Right ventricle myocardium inferior (tissue), 1 donor: ENCODE measurements at regions of chr9 and their contacts with region 1.

Region 1: DNA sequence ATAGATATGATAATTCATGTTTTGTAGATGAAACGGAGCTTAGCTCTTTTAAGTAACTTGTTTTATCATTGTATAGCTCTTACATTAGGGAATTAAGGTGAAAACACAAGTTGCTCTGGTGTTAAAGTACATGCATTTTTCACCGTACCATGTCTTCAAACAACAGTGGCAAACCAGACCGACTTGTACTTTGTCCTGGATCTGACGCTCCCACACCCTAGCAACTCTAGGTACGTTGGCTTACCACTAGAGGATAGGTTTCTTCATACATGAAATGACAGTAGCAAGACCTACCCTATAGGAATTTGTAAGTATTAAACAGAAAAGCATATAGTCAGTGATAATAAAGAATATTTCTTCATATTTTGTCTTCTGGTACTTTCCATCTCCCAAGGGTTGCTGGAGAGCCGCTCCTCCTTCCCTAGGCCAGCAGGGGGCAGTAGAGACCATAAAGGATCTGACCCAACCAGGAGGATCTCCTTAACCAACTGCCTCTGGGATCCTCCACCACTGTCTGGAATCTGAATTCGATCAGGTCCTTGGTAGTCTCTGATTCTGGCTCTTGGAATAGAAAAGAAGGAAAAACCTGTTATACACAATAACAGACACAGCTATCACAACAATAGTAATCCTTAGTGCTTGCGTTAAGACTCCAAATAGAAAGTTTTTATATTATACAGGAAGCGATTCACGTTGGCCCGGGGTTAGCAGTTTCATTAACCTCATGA is 136.7 kb downstream of the CAVIN4 start:
- DNase-seq: no peak
- ATAC-seq: peak; percentile 64

Region 2: DNA sequence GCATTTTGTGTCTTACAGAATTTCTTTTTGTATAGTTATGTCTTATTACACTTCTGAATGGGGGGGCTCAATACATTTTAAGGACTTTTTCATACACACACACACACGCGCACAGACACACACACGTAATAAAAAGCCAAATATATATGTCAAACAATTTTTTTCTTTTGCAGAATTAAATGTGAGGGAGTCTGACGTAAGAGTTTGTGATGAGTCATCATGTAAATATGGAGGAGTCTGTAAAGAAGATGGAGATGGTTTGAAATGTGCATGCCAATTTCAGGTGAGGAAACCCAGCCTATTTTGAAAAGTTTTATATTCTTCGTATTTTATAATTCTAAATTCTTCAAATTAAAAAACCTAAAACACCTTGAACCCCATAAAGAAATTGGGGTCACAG is 215.9 kb before region 1 on chr9:
- intact Hi-C with region 1: no loop called
- DNase-seq: no peak
- ATAC-seq: no peak

Region 3: DNA sequence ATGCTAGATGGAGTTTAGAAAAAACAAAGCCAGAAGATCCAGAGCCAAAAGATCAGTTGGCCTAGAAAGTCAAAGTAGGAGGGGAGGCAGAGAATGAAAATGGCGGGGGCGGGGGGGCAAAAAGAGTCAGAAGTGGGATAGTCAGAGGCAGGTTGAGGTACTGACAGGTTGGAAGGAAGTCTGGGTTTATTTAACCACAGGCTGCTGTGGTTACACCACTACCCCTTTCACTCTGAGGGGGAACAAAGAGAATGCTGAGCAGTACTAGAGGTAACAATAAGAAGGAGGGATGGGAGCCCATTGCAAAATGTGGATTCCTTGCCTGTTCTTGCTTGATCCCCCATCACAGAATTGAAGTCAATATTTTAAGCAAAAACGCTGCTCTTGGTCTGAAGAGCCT is 24.9 kb before region 1 on chr9:
- intact Hi-C with region 1: no loop called
- DNase-seq: no peak
- ATAC-seq: no peak

Region 4: GRCh38 chr9:100759215-100759614 is 44.7 kb after region 1 on chr9:
- intact Hi-C with region 1: no loop called
- DNase-seq: no peak
- ATAC-seq: no peak

Region 5: GRCh38 chr9:101235105-101235866 is 520.8 kb after region 1 on chr9:
- intact Hi-C with region 1: loop called (anchors 10 kb)
- DNase-seq: no peak
- ATAC-seq: no peak

Region 6: GRCh38 chr9:101311758-101312420 is 597.4 kb after region 1 on chr9:
- intact Hi-C with region 1: loop called (anchors 5 kb)
- DNase-seq: no peak
- ATAC-seq: no peak